AG04449 (cell line): ENCODE measurements at regions of chr15 and their contacts with region 1.

Region 1: DNA sequence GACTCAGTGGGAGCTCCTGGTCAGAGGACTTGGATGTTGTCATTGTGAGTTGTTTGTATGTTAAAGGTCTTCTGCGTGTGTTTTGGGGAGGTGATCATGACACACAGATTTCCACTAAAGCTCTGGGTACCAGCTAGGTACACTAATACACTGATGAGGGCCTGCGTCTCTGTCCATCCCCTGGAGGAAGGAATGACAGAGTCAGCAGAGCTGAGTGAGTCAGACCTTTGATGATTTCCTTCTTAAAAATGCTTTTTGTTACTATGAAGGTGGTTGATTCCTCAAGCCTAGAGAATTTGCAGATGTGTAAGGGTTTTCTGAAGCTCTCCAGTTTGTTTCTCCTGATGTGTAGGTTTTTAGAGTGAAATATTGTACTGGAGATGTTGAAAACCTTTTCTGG is 424.1 kb upstream of the TPM1 start:
- DNase-seq: peak; percentile 47
- H3K4me3 ChIP-seq: no peak overlapping the region
- CTCF ChIP-seq: peak; percentile 68

Region 2: GRCh38 chr15:62389885-62390790 is 228.3 kb before region 1 on chr15:
- CTCF ChIA-PET with region 1: interaction called, 10 read pairs
- POLR2A ChIA-PET with region 1: no interaction called
- DNase-seq: no peak
- H3K4me3 ChIP-seq: peak within 1 kb of the TSS; percentile 90
- CTCF ChIP-seq: no peak

Region 3: DNA sequence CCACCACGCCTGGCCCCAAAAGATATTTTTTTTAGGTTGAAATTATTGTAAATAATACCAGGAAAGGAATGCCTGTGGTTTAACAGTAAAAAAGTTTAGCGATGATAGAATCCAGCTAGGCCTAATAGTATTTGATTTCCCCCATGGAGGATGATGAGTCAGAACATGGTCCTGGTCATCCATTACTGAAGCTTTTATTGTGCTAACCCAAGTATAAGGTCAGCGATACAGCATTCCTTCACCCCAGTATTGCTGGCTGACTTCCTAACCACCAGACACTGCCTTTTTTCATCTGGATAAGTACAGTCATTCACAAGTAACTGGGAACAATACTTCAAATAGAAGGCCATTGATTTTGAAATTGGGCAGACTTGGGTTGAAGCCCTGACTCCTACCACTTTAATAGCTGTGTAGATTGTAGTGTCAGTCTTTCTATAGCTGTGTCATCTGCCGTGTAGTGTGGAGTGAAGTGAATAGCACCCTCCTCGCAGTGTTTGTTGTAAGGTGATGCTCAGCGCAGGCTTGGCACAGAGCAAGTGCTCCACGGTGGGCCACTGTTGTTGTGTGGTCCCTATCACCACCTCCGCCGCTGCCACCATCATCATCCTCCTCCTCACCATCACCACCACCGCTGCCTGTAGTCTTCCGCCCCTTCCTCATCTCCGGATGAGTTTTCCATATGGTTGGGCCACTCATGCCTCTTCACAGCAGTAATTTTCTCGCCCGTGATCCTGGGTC is 11.9 kb before region 1 on chr15:
- CTCF ChIA-PET with region 1: interaction called, 38 read pairs
- POLR2A ChIA-PET with region 1: interaction called, 14 read pairs
- DNase-seq: peak; percentile 99
- H3K4me3 ChIP-seq: no peak overlapping the region
- CTCF ChIP-seq: no peak